ENCODE measurements at regions of chr1 and their contacts with region 1.

Region 1: GRCh38 chr1:17831619-17832018 is 76.5 kb downstream of the ACTL8 start:
- DNase-seq: no peak
- ATAC-seq: no peak

Region 2: GRCh38 chr1:17861685-17862084 is 30.1 kb after region 1 on chr1:
- intact Hi-C with region 1: loop called (anchors 2 kb)
- DNase-seq: no peak
- ATAC-seq: no peak

Region 3: GRCh38 chr1:18100491-18101063 is 269.0 kb after region 1 on chr1:
- intact Hi-C with region 1: no loop called
- DNase-seq: peak; percentile 45
- ATAC-seq: peak; percentile 57

Measured in left ventricle myocardium superior (tissue), 1 donor.